AG04449 (cell line): ENCODE measurements at regions of chr2 and their contacts with region 1.

Region 1: DNA sequence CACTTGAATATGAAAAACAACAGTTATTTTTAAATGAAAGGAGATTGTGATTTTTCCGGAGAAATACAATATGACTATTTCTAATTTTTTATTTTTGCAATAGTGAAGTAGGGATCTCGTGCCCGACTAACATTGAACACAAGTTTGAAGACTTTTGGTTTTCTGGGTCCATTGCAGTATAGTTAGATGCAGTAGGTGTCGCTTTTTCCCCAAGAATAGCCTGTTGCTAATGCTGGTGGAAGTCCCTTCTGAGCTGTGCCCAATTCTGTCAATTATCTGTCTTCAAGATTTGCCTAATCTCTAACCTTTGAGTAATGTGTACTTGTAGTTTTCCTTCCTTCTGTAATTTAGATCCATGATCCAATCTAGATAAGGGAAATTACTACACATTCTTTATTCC is 36.5 kb downstream of the SEMA4F start:
- DNase-seq: no peak
- H3K4me3 ChIP-seq: no peak overlapping the region
- CTCF ChIP-seq: peak; percentile 64

Region 2: GRCh38 chr2:74675090-74675489 is 15.5 kb before region 1 on chr2:
- CTCF ChIA-PET with region 1: interaction called, 16 read pairs
- POLR2A ChIA-PET with region 1: no interaction called
- DNase-seq: no peak
- H3K4me3 ChIP-seq: no peak overlapping the region
- CTCF ChIP-seq: no peak

Region 3: GRCh38 chr2:74703373-74703772 is 12.8 kb after region 1 on chr2:
- CTCF ChIA-PET with region 1: interaction called, 20 read pairs
- POLR2A ChIA-PET with region 1: no interaction called
- DNase-seq: no peak
- H3K4me3 ChIP-seq: no peak overlapping the region
- CTCF ChIP-seq: no peak

Region 4: GRCh38 chr2:74708883-74709282 is 18.3 kb after region 1 on chr2:
- CTCF ChIA-PET with region 1: interaction called, 20 read pairs
- POLR2A ChIA-PET with region 1: no interaction called
- DNase-seq: no peak
- H3K4me3 ChIP-seq: no peak overlapping the region
- CTCF ChIP-seq: no peak

Region 5: DNA sequence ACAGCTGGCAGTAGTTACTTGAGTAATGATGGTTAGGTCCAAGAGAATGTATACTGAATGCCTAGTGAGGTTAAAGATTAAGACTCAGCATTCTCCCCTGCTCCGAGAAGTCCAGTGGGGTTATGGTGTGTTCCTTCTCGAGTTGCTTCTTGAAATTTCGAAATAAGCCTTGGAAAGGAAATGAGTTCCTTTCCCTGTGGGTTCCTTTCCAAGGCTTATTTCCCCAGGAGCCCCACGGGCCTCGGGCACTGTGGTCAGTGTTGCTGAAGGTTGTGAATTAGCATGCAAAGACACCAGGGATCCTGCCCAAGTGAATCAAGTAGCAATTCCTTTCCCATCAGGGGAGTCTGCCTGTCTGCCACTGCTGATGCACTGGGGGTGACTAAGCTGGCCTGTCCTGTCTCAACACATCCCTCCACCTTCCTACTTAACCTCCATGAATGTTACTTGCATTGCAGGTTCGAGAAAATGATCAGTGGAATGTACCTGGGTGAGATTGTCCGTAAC is 196.9 kb after region 1 on chr2:
- CTCF ChIA-PET with region 1: interaction called, 20 read pairs
- POLR2A ChIA-PET with region 1: no interaction called
- DNase-seq: peak; percentile 67
- H3K4me3 ChIP-seq: no peak overlapping the region
- CTCF ChIP-seq: no peak

Region 6: GRCh38 chr2:74893332-74893731 is 202.8 kb after region 1 on chr2:
- CTCF ChIA-PET with region 1: interaction called, 20 read pairs
- POLR2A ChIA-PET with region 1: no interaction called
- DNase-seq: no peak
- H3K4me3 ChIP-seq: no peak overlapping the region
- CTCF ChIP-seq: no peak

Region 7: DNA sequence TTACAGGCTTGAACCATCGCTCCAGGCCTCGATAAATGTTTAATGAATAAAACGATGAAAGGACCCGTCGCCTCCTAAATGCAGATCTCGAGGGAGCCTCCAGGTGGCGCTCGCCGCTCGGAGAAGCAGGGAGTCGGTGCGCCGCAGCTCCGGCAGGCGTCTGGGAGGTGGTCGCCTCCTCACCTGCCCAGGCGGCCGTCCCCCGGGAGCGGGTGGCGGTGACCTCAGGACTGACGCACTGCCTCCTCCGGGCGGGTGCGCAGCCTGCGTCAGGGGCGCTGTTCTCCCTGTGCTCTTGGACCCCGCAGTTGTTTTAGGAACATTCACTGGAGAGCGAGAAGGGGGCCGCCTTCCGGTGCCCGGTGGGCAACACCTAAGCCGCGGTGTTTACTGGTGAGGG is 229.3 kb after region 1 on chr2:
- CTCF ChIA-PET with region 1: interaction called, 10 read pairs
- POLR2A ChIA-PET with region 1: no interaction called
- DNase-seq: no peak
- H3K4me3 ChIP-seq: peak overlapping the region; percentile 57
- CTCF ChIP-seq: peak; percentile 86